ENCODE measurements at regions of chr17 and their contacts with region 1.

Region 1: DNA sequence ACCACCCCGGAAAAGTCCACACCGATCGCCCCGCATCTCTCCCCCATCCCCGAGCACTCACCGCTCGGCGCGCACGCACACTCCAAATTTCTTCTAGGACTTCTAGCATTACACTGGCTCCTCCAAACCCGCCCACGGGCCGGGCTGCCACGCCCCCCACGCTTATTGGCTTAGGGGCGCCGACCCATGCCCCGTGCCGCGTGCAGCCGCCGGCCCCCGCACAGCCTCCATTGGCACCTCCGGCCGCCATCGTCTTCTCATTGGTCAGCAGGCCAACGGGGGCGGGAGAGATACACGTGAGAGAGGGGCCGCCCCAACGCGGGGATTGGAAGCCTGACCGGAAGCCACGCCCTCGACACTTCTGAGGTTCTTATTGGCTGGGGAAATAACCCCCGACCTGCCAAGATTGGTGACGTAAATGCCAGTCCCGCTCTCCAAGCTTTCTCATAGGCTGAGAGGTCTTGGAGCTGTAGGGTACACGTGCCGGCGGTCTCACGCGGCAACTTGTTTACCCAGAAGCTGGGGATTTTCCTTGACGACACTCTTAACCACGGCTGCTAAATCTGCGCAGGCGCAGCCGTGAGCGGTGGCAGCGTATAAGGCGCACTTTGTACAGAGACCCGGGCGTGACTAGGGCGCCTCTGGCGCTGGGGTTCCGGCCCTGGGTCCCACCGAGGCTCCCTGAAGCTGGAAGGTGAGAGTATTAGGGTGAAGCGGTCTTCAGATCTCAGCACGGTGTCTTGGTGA is 4.2 kb upstream of the PER1 start:
- DNase-seq: peak; percentile 96
- CTCF ChIP-seq: no peak

Region 2: DNA sequence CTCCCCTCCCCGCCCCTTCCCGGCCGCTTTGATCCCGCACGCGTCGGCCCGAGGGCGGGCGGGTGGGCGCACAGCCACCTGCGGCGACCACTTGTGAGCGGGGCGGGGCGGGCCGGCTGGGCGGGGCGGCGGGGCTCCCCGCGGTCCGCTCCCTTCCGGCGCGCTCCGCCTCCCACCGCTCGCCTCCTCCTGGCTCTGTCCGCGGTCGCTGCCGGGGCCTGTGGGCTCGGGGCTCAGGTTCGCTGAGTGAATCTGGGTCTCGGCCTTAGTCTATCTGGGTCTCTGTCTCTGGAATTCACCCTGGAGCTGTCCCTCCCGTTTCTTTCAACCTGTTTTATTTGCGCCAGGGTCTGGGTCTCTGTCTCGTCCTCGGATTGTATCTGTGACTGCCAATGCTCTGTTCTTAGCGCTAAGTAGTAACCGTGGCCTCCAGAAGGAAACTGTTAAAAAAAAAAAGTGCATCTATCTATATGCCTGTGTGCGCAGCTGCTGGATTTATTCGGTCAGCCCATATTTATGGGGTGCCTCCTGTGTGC is 29.8 kb before region 1 on chr17:
- CTCF ChIA-PET with region 1: interaction called, 13 read pairs
- POLR2A ChIA-PET with region 1: interaction called, 3 read pairs
- DNase-seq: peak; percentile 75
- CTCF ChIP-seq: no peak

Region 3: DNA sequence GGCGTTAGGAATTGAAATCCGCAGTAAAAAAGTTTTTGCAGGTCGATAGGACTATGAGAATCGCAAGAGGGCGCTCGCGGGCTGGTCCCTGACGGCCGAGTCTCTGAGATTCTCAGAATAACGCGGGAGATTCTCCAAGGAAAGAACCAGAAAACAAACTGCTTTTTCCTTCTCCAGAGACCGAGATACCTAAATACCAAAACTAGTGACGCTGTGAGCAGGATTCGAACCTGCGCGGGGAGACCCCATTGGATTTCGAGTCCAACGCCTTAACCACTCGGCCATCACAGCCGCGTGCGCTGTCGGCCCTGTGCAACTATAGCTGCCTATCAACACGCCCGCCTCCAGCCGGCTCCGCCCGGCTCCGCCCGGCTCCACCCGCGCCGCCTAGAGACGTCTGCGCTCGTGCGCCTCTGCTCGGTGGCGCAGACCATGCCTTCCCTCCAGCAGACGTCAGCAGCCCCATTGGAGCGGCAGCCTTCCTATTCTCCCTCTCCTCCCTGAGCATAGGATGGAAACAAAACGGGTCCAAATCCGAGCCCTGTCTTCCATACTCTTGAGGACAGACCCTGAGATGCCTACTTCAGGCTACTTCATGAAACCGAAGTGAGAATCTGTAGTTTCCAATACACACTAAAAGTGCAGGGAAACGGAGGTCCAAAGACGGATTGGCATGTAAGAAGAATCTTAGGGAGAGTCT is 17.6 kb before region 1 on chr17:
- CTCF ChIA-PET with region 1: interaction called, 67 read pairs
- POLR2A ChIA-PET with region 1: interaction called, 37 read pairs
- DNase-seq: peak; percentile 91
- CTCF ChIP-seq: peak; percentile 67

Region 4: GRCh38 chr17:8143764-8144719 is 12.4 kb before region 1 on chr17:
- CTCF ChIA-PET with region 1: interaction called, 67 read pairs
- POLR2A ChIA-PET with region 1: interaction called, 37 read pairs
- DNase-seq: no peak
- CTCF ChIP-seq: no peak

Region 5: GRCh38 chr17:8189711-8190477 is 33.5 kb after region 1 on chr17 and contains the start of gene BORCS6:
- CTCF ChIA-PET with region 1: interaction called, 13 read pairs
- POLR2A ChIA-PET with region 1: interaction called, 4 read pairs
- DNase-seq: peak; percentile 91
- CTCF ChIP-seq: peak; percentile 33

Region 6: DNA sequence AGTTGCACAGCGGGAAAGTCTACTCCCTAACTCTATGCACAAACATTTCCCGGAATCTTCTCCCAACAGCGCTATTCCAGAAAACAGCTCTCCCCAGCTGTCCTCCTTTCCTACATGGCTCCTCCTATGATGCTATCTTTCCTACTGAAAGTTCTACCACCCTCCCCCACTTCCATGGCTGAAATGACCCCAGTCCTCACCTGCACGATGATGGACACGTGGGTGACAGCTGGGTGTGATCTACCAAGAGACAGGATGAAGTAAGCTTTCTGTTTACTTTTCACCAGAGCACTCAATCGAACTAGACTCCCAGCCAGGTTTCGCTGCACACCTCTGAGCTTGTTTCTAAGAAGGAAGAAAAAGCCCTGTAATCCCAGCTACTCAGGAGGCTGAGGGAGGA is 80.8 kb after region 1 on chr17:
- CTCF ChIA-PET with region 1: no interaction called
- POLR2A ChIA-PET with region 1: no interaction called
- DNase-seq: no peak
- CTCF ChIP-seq: no peak

Measured in GM10248 (cell line).